ENCODE measurements at regions of chr11 and their contacts with region 1.

Region 1: GRCh38 chr11:62705880-62706849 is 1.1 kb downstream of the BSCL2 start:
- DNase-seq: peak; percentile 89 to 98 (median 94)
- ATAC-seq: peak; percentile 62
- H3K4me3 Mint-ChIP-seq: peak overlapping the region; percentile 85 to 95 (median 90)
- H3K27ac Mint-ChIP-seq: peak overlapping the region; percentile 88 to 100 (median 96)
- H3K4me1 Mint-ChIP-seq: peaks cover 24 to 56% (median 42%) of the 10 kb centered on the region in 4 donors
- H3K27me3 Mint-ChIP-seq: no peaks in the 10 kb centered on the region

Region 2: GRCh38 chr11:62479631-62480201 is 226.4 kb before region 1 on chr11:
- POLR2A ChIA-PET with region 1: no interaction called
- DNase-seq: no peak
- ATAC-seq: no peak
- H3K4me3 Mint-ChIP-seq: no peak overlapping the region
- H3K27ac Mint-ChIP-seq: no peak overlapping the region
- H3K4me1 Mint-ChIP-seq: no peaks in the 10 kb centered on the region
- H3K27me3 Mint-ChIP-seq: no peaks in the 10 kb centered on the region

Region 3: GRCh38 chr11:62556108-62556871 is 149.9 kb before region 1 on chr11:
- POLR2A ChIA-PET with region 1: interaction called, 11 read pairs
- DNase-seq: peak; percentile 57 to 94 (median 80)
- ATAC-seq: peak; percentile 50 to 56
- H3K4me3 Mint-ChIP-seq: peak overlapping the region; percentile 61 to 90 (median 86)
- H3K27ac Mint-ChIP-seq: peak overlapping the region; percentile 97 to 100 (median 99)
- H3K4me1 Mint-ChIP-seq: peaks cover 50 to 98% (median 88%) of the 10 kb centered on the region in 4 donors
- H3K27me3 Mint-ChIP-seq: peaks cover 0 to 2% (median 0%) of the 10 kb centered on the region in 5 donors

Region 4: GRCh38 chr11:62621567-62622470 is 84.3 kb before region 1 on chr11 and contains the start of gene B3GAT3:
- POLR2A ChIA-PET with region 1: interaction called, 11 read pairs
- DNase-seq: peak; percentile 87 to 98 (median 95)
- ATAC-seq: peak; percentile 83 to 85
- H3K4me3 Mint-ChIP-seq: peak within 1 kb of the TSS; percentile 86 to 97 (median 94)
- H3K27ac Mint-ChIP-seq: peak within 1 kb of the TSS; percentile 92 to 99 (median 98)
- H3K4me1 Mint-ChIP-seq: peaks cover 13 to 36% (median 32%) of the 10 kb centered on the region in 4 donors
- H3K27me3 Mint-ChIP-seq: peaks cover 0 to 2% (median 0%) of the 10 kb centered on the region in 5 donors
- polyA plus RNA-seq, gene B3GAT3: 35.6 to 51.3 (median 40.3) TPM

Region 5: GRCh38 chr11:62671575-62672389 is 34.4 kb before region 1 on chr11 and contains the starts of genes LBHD1 and UQCC3:
- POLR2A ChIA-PET with region 1: interaction called, 49 read pairs
- DNase-seq: peak; percentile 52 to 85 (median 68)
- ATAC-seq: peak; percentile 75 to 76
- H3K4me3 Mint-ChIP-seq: peak within 1 kb of the TSS; percentile 96 to 100 (median 98)
- H3K27ac Mint-ChIP-seq: peak within 1 kb of the TSS; percentile 92 to 99 (median 96)
- H3K4me1 Mint-ChIP-seq: peaks cover 22 to 67% (median 50%) of the 10 kb centered on the region in 4 donors
- H3K27me3 Mint-ChIP-seq: no peaks in the 10 kb centered on the region
- polyA plus RNA-seq, gene LBHD1: 2.4 to 8.3 (median 4.4) TPM
- polyA plus RNA-seq, gene UQCC3: 9.1 to 9.7 (median 9.6) TPM

Region 6: GRCh38 chr11:62726915-62727763 is 21.0 kb after region 1 on chr11 and contains the start of gene HNRNPUL2:
- POLR2A ChIA-PET with region 1: interaction called, 263 read pairs
- DNase-seq: peak; percentile 98 to 99 (median 99)
- ATAC-seq: peak; percentile 79 to 81
- H3K4me3 Mint-ChIP-seq: peak within 1 kb of the TSS; percentile 92 to 99 (median 96)
- H3K27ac Mint-ChIP-seq: peak within 1 kb of the TSS; percentile 90 to 100 (median 99)
- H3K4me1 Mint-ChIP-seq: peaks cover 25 to 66% (median 53%) of the 10 kb centered on the region in 4 donors
- H3K27me3 Mint-ChIP-seq: peaks cover 0 to 2% (median 0%) of the 10 kb centered on the region in 5 donors
- polyA plus RNA-seq, gene HNRNPUL2: 0.99 to 3.0 (median 1.0) TPM

Region 7: DNA sequence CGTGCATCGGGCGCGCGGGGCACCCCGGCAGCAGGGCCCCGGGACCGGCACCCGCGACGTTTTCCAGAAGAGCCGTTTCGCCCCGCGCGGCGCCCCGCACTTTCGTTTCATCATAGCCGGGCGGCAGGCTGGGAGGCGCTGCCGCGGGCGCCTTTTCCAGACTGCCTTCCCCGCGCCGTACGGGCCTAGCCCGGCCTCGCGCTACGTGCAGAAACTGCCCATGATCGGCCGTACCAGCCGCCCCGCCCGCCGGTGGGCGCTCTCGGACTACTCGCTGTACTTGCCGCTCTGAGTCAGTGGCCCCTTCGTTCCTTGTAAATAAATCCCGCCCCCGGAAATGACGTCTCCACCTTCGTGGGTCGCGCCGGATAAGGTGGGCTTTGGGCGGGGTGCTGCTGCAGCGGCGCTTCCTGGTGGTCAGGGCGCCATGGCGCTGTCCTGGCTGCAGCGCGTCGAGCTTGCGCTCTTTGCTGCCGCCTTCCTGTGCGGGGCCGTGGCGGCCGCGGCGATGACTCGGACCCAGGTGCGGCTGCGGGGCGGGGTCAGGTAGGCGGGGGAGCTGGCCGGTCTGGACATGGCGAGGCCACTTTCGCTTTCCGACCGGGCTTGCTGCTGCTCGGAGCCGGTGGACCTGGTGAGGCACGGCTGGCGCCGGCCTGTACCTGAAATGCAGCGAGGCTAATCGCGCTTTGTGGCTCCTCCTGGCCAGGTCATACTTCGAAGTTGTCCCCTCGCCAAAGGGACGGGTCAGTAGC is 81.0 kb after region 1 on chr11 and contains the start of gene TMEM179B:
- POLR2A ChIA-PET with region 1: interaction called, 18 read pairs
- DNase-seq: peak; percentile 90 to 99 (median 97)
- ATAC-seq: peak; percentile 69 to 73
- H3K4me3 Mint-ChIP-seq: peak within 1 kb of the TSS; percentile 90 to 96 (median 96)
- H3K27ac Mint-ChIP-seq: peak within 1 kb of the TSS; percentile 92 to 98 (median 96)
- H3K4me1 Mint-ChIP-seq: peaks cover 14 to 53% (median 46%) of the 10 kb centered on the region in 4 donors
- H3K27me3 Mint-ChIP-seq: no peaks in the 10 kb centered on the region
- polyA plus RNA-seq, gene TMEM179B: 109 to 126 (median 122) TPM

Region 8: GRCh38 chr11:62880803-62881578 is 174.8 kb after region 1 on chr11 and contains the start of gene SLC3A2:
- POLR2A ChIA-PET with region 1: interaction called, 16 read pairs
- DNase-seq: peak; percentile 77 to 90 (median 84)
- ATAC-seq: peak; percentile 81 to 82
- H3K4me3 Mint-ChIP-seq: peak within 1 kb of the TSS; percentile 96 to 100 (median 99)
- H3K27ac Mint-ChIP-seq: peak within 1 kb of the TSS; percentile 97 to 100 (median 100)
- H3K4me1 Mint-ChIP-seq: peaks cover 33 to 53% (median 51%) of the 10 kb centered on the region in 4 donors
- H3K27me3 Mint-ChIP-seq: no peaks in the 10 kb centered on the region
- polyA plus RNA-seq, gene SLC3A2: 119 to 164 (median 125) TPM

Region 9: GRCh38 chr11:62905927-62906531 is 199.9 kb after region 1 on chr11:
- POLR2A ChIA-PET with region 1: no interaction called
- DNase-seq: peak; percentile 57 to 86 (median 74)
- ATAC-seq: peak; percentile 64 to 95
- H3K4me3 Mint-ChIP-seq: no peak overlapping the region
- H3K27ac Mint-ChIP-seq: no peak overlapping the region
- H3K4me1 Mint-ChIP-seq: peaks cover 3 to 6% (median 4%) of the 10 kb centered on the region in 4 donors
- H3K27me3 Mint-ChIP-seq: peaks cover 2 to 24% (median 14%) of the 10 kb centered on the region in 5 donors

Measured in naive thymus-derived CD8-positive, alpha-beta T cell (primary cell).